ENCODE measurements at regions of chr1 and their contacts with region 1.

Region 1: DNA sequence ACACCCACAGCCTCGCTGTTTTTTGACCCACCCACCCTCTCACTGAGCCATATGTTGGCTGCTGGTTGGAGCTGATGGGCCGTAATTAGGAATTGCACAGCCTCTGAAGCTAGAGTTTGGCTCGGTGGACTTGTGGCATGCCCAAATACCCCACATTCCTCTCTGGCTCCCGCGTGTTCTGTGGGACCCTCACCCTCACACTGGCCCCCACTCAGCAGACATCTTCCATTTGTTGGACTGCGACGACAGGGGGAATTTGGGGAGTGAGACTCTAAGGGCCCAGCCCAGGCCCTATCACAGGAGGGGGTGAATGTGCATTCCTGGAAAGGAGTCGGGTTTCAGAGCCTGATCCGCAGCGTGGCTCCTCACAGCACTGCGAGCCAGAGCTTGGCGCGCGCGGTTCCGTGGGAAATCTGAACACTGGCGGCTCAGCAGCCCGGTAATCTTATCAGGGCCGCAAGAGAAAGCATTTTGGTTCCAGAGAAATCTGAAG is 5.2 kb downstream of the RCSD1 start:
- DNase-seq: no peak
- H3K4me3 ChIP-seq: peak overlapping the region; percentile 1
- H3K4me3 Mint-ChIP-seq: peak overlapping the region in 4 of 7 donors; percentile 46 to 96 (median 96)
- H3K27ac ChIP-seq: no peak overlapping the region
- H3K27ac Mint-ChIP-seq: peak overlapping the region in 4 of 8 donors; percentile 33 to 99 (median 96)
- H3K4me1 ChIP-seq: peaks cover 82% of the 10 kb centered on the region
- H3K4me1 Mint-ChIP-seq: peaks cover 74 to 90% (median 79%) of the 10 kb centered on the region in 3 donors
- H3K27me3 ChIP-seq: no peaks in the 10 kb centered on the region
- H3K27me3 Mint-ChIP-seq: peaks cover 0 to 5% of the 10 kb centered on the region in 2 donors

Region 2: GRCh38 chr1:167367705-167368104 is 267.5 kb before region 1 on chr1:
- CTCF ChIA-PET with region 1: no interaction called
- POLR2A ChIA-PET with region 1: no interaction called
- DNase-seq: no peak
- H3K4me3 ChIP-seq: no peak overlapping the region
- H3K4me3 Mint-ChIP-seq: no peak overlapping the region
- H3K27ac ChIP-seq: no peak overlapping the region
- H3K27ac Mint-ChIP-seq: peak overlapping the region in 1 of 8 donors; percentile 29
- H3K4me1 ChIP-seq: no peaks in the 10 kb centered on the region
- H3K4me1 Mint-ChIP-seq: peaks cover 0 to 2% (median 0%) of the 10 kb centered on the region in 3 donors
- H3K27me3 ChIP-seq: no peaks in the 10 kb centered on the region
- H3K27me3 Mint-ChIP-seq: no peaks in the 10 kb centered on the region

Region 3: DNA sequence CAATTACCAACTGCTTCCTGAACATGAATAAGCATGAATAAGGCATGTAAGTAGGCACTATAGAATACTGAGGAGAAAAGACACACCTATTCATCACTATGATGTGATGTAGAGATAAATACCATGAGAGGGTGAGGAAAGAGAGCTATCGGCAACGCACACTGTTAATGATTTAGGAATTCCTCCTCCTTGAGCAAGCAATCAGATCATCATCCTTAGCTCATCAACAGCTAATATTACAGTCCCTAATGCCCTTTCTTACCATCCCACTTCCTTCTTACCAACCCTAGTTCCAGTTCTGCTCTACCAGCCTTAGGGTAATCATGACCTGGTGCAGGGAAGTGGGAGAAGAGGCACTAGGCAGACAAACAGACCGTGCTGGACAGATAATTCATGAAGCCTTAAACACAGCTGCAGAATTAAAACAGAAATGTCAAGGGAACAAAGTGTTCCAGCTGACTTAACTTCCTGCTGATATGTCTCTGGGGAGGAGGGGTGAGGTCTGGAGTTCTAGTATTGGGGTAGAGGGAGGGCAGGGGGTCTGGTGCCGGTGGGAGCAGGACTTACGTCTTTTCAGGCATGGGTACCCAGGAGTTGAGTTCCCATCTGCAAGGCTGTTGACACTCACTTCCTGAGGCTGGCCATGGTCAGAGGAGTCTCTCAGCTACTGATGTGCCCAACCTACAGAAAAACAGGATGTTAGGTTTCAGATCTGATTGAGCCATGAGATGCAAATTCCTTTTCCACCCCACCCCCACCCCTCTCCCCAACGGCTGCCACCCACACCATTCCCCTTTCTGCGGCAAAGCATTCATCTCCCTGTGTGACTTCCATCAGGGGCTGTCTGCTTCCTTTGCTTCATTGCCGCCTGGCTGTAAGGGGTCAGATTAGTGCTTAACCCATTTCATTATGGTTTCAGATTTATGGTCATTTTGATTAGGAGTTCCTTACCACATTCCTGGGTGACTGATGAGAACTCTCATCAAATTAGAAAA is 17.8 kb before region 1 on chr1:
- CTCF ChIA-PET with region 1: interaction called, 20 read pairs
- POLR2A ChIA-PET with region 1: interaction called, 6 read pairs
- DNase-seq: peak in 1 of 5 donors; percentile 18
- H3K4me3 ChIP-seq: peak overlapping the region; percentile 39
- H3K4me3 Mint-ChIP-seq: peak overlapping the region in 6 of 7 donors; percentile 70 to 80 (median 76)
- H3K27ac ChIP-seq: peak overlapping the region; percentile 32
- H3K27ac Mint-ChIP-seq: peak overlapping the region; percentile 37 to 94 (median 89)
- H3K4me1 ChIP-seq: peaks cover 38% of the 10 kb centered on the region
- H3K4me1 Mint-ChIP-seq: peaks cover 39 to 78% (median 50%) of the 10 kb centered on the region in 3 donors
- H3K27me3 ChIP-seq: no peaks in the 10 kb centered on the region
- H3K27me3 Mint-ChIP-seq: no peaks in the 10 kb centered on the region

Region 4: GRCh38 chr1:167650269-167651160 is 15.3 kb after region 1 on chr1:
- CTCF ChIA-PET with region 1: interaction called, 12 read pairs
- POLR2A ChIA-PET with region 1: no interaction called
- DNase-seq: no peak
- H3K4me3 ChIP-seq: peak overlapping the region; percentile 2
- H3K4me3 Mint-ChIP-seq: peak overlapping the region in 6 of 7 donors; percentile 48 to 86 (median 77)
- H3K27ac ChIP-seq: no peak overlapping the region
- H3K27ac Mint-ChIP-seq: peak overlapping the region; percentile 83 to 98 (median 95)
- H3K4me1 ChIP-seq: peaks cover 78% of the 10 kb centered on the region
- H3K4me1 Mint-ChIP-seq: peaks cover 89 to 93% (median 93%) of the 10 kb centered on the region in 3 donors
- H3K27me3 ChIP-seq: no peaks in the 10 kb centered on the region
- H3K27me3 Mint-ChIP-seq: peaks cover 0 to 3% of the 10 kb centered on the region in 2 donors

Region 5: DNA sequence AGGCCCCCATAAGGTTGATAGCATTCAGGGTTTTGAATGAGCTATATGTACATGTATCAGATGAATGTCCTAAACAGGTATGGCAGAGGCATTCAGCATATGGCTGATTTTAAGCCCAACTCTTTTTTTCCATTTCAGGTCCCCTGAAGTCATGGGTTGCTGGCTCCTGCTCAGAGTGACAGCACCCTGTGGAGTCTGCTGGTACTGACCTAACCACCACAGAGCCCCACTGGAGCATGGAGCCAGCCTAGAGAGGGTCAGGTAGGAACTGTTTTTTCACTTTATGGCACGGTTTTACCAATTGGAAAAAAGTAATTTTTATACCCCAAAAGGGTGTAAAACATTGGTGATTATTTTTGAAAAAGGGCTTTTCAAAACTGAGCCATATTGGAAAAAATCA is 384.2 kb after region 1 on chr1:
- CTCF ChIA-PET with region 1: no interaction called
- POLR2A ChIA-PET with region 1: no interaction called
- DNase-seq: no peak
- H3K4me3 ChIP-seq: no peak overlapping the region
- H3K4me3 Mint-ChIP-seq: no peak overlapping the region
- H3K27ac ChIP-seq: no peak overlapping the region
- H3K27ac Mint-ChIP-seq: no peak overlapping the region
- H3K4me1 ChIP-seq: no peaks in the 10 kb centered on the region
- H3K4me1 Mint-ChIP-seq: no peaks in the 10 kb centered on the region
- H3K27me3 ChIP-seq: no peaks in the 10 kb centered on the region
- H3K27me3 Mint-ChIP-seq: no peaks in the 10 kb centered on the region